ENCODE measurements at regions of chr12 and their contacts with region 1.

Region 1: DNA sequence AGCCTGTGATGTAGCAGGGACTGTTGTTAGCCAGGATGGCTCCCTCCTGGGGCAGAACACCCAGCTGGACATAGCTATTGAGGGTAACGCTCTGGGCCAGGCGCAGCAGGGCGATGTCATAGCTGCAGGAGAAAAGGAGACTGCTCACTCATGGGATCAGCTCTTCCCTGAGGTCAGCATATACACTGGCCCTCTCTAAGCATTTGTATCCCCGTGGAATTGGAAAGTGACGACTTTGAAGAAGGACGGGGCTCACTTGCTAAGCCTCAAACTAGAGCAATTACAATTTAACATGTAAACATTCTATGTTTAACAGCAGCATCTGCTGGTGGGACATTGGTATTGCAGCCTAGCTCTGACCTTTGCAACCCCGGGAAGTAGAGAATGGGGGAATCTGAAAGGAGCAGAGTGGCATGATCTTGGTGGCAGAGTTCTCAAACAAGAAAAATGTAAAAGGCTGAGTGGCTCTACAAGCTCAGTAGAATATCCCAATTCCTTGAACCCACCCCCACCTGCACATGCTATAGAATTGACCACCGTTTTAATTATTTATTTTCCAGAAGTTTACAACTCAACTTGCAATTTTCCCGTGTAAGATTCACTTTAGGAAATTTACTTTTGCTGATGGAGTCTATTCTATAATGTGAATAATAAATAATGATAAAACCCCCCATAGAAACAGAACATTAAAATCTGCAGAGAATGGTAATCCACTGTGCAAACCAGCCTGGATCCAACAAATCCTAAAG is 5.0 kb downstream of the CELA1 start:
- DNase-seq: peak in 1 of 2 experiments; percentile 79
- H3K4me3 ChIP-seq: peak overlapping the region in 1 of 4 experiments; percentile 37; a peak in 2 of 8 replicates
- H3K27ac ChIP-seq: no peak overlapping the region
- H3K4me1 ChIP-seq: peaks cover 0 to 3% (median 2%) of the 10 kb centered on the region in 4 experiments; a peak in 3 of 7 replicates
- H3K27me3 ChIP-seq: no peaks in the 10 kb centered on the region
- CTCF ChIP-seq: peak; percentile 58 to 99 (median 88)
- EP300 ChIP-seq: no peak
- POLR2A ChIP-seq: no peak
- RAD21 ChIP-seq: peak; percentile 98

Region 2: GRCh38 chr12:51246254-51246853 is 95.1 kb before region 1 on chr12:
- CTCF ChIA-PET with region 1: interaction called, 28 read pairs
- POLR2A ChIA-PET with region 1: no interaction called
- DNase-seq: no peak
- H3K4me3 ChIP-seq: no peak overlapping the region
- H3K27ac ChIP-seq: no peak overlapping the region
- H3K4me1 ChIP-seq: peaks cover 0 to 19% (median 7%) of the 10 kb centered on the region in 4 experiments; a peak in 6 of 7 replicates
- H3K27me3 ChIP-seq: no peaks in the 10 kb centered on the region
- CTCF ChIP-seq: peak in 2 of 3 experiments; percentile 39 to 40; a peak in 3 of 4 replicates
- EP300 ChIP-seq: no peak
- POLR2A ChIP-seq: no peak
- RAD21 ChIP-seq: peak; percentile 56 to 64

Region 3: DNA sequence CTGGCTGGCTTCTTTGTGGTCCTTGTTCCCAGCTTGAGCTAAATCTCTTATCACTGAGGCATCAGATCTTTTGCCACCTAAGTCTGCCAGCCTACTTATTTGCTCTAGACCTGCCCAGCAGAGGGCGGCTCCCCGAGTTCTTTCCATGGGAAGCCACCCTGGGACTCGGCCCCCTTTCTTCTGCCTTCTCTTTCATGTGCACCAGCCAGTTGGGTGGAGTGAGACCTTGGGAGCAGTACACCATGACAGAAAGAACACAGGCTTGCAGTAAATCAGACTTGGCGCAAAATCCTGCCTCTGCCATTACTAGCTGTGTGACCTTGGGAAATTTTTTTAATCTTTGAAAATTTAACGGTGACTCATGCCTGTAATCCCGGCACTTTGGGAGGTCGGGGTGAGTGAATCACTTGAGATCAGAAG is 78.7 kb before region 1 on chr12:
- CTCF ChIA-PET with region 1: interaction called, 111 read pairs
- POLR2A ChIA-PET with region 1: no interaction called
- DNase-seq: peak in 1 of 2 experiments; percentile 77
- H3K4me3 ChIP-seq: no peak overlapping the region
- H3K27ac ChIP-seq: no peak overlapping the region
- H3K4me1 ChIP-seq: 0 out of 7 replicates have a peak, but pooled peaks cover 0 to 2% (median 0%) of the 10 kb centered on the region in 4 experiments
- H3K27me3 ChIP-seq: no peaks in the 10 kb centered on the region
- CTCF ChIP-seq: peak; percentile 57 to 69 (median 65)
- EP300 ChIP-seq: no peak
- POLR2A ChIP-seq: no peak
- RAD21 ChIP-seq: peak; percentile 48 to 62

Region 4: GRCh38 chr12:51285841-51286240 is 55.6 kb before region 1 on chr12:
- CTCF ChIA-PET with region 1: interaction called, 33 read pairs
- POLR2A ChIA-PET with region 1: no interaction called
- DNase-seq: no peak
- H3K4me3 ChIP-seq: no peak overlapping the region
- H3K27ac ChIP-seq: no peak overlapping the region
- H3K4me1 ChIP-seq: no peaks in the 10 kb centered on the region
- H3K27me3 ChIP-seq: no peaks in the 10 kb centered on the region
- CTCF ChIP-seq: no peak
- EP300 ChIP-seq: no peak
- POLR2A ChIP-seq: no peak
- RAD21 ChIP-seq: no peak

Region 5: GRCh38 chr12:51307655-51308593 is 33.5 kb before region 1 on chr12:
- CTCF ChIA-PET with region 1: interaction called, 24 read pairs
- POLR2A ChIA-PET with region 1: interaction called, 4 read pairs
- DNase-seq: no peak
- H3K4me3 ChIP-seq: no peak overlapping the region
- H3K27ac ChIP-seq: no peak overlapping the region
- H3K4me1 ChIP-seq: no peaks in the 10 kb centered on the region
- H3K27me3 ChIP-seq: no peaks in the 10 kb centered on the region
- CTCF ChIP-seq: no peak
- EP300 ChIP-seq: no peak
- POLR2A ChIP-seq: no peak
- RAD21 ChIP-seq: no peak

Region 6: DNA sequence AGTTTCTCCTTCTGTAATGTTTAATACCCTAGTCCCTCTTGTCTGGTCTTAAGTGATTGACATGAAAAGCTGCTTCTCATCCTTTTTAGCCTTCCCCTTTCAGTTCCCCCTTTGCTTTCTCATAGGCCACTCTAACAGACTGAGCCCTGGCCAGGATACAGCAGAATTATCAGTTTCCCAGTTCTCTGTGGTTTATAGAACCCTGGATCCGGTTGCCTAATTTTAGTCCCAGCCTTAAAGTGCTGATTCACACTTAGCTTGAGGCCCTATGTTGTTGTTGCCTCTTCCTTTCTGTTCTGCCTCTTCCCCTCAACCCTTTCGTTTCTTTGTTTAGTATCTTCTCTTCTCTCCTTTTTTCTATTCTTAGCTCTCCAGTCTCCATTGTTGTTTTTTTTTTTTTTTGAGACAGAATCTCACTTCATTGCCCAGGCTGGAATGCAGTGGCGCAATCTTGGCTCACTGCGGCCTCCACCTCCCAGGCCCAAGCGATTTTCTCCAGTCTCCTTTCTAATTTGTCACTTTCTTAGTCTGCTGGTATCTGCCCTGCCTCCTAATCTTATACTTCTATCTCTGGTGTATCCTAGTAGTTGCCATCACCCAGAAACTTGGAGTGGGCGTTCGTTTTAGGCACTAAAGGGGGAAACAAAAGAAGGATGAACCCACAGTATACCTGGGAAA is 14.5 kb before region 1 on chr12:
- CTCF ChIA-PET with region 1: interaction called, 45 read pairs
- POLR2A ChIA-PET with region 1: interaction called, 8 read pairs
- DNase-seq: no peak
- H3K4me3 ChIP-seq: no peak overlapping the region
- H3K27ac ChIP-seq: no peak overlapping the region
- H3K4me1 ChIP-seq: peaks cover 0 to 3% (median 0%) of the 10 kb centered on the region in 4 experiments; a peak in 2 of 7 replicates
- H3K27me3 ChIP-seq: no peaks in the 10 kb centered on the region; a peak in 1 of 7 replicates
- CTCF ChIP-seq: no peak
- EP300 ChIP-seq: no peak
- POLR2A ChIP-seq: no peak
- RAD21 ChIP-seq: no peak

Region 7: DNA sequence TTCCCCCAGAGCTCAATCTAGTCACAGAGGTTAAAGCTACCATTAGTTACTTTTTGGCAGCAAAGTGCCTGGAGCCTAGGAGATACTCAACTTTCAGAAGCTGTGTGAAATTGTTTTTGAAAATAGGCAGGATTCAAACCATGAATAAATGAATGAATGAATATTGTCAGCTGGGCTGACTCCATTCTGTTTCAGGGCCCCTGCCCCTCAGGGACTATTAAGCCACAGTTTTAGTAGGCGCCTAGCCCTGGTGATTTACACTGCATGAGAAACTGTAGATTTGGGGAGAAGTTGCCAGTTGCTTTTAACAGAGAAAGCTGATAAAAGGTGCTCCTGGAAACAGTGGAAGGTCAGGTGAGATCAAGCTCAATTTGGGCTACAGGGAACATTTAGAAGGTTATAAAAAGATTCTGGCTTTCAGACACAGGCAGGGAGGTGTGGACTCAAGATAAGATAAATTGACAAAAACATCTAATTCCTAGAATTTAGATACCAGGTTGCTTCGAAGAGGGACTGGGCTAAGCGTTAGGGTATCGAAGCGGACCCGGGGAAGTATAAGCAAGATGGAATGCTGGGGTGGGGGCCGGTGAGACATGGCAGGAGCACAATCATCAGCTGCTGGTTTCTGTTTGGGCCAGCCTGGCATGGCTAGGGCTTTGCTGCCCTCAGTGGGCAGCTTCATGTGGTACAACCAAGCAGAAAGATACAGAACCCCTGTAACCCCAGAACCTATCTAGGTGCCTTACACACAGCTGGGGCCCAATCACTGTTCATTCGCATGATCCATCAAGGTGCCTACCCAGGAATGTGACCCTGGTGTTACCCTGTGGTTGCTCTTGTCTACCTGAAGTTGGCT is 20.0 kb after region 1 on chr12:
- CTCF ChIA-PET with region 1: interaction called, 119 read pairs
- POLR2A ChIA-PET with region 1: no interaction called
- DNase-seq: no peak
- H3K4me3 ChIP-seq: no peak overlapping the region
- H3K27ac ChIP-seq: no peak overlapping the region
- H3K4me1 ChIP-seq: no peaks in the 10 kb centered on the region; a peak in 1 of 7 replicates
- H3K27me3 ChIP-seq: no peaks in the 10 kb centered on the region
- CTCF ChIP-seq: 0 out of 4 replicates have a peak, but pooled peaks of 1 of the 3 experiments have one; percentile 11
- EP300 ChIP-seq: no peak
- POLR2A ChIP-seq: no peak
- RAD21 ChIP-seq: peak in 1 of 2 experiments; percentile 4; a peak in 1 of 4 replicates

Region 8: DNA sequence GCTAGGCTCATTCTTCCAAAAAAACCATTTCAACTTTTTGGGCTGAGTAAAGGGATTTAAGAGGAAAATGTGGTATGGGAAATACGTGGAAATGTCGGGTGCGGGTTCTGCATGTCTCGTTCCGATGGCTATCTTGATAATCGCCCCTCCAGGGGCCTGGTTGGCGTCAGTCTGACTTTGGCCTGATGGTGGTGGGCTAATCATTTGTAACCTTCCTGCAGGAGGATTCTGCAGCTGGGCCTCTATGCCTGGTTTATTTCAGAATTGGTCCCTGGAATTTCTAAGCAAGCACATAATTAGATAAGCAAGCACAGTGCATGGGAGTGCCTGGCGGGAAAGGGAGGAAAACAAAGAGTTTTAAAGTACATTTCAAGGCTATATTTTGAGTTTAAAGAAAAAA is 68.4 kb after region 1 on chr12:
- CTCF ChIA-PET with region 1: no interaction called
- POLR2A ChIA-PET with region 1: no interaction called
- DNase-seq: no peak
- H3K4me3 ChIP-seq: no peak overlapping the region
- H3K27ac ChIP-seq: no peak overlapping the region
- H3K4me1 ChIP-seq: no peaks in the 10 kb centered on the region; a peak in 1 of 7 replicates
- H3K27me3 ChIP-seq: no peaks in the 10 kb centered on the region
- CTCF ChIP-seq: peak in 1 of 3 experiments; percentile 8; a peak in 1 of 4 replicates
- EP300 ChIP-seq: no peak
- POLR2A ChIP-seq: no peak
- RAD21 ChIP-seq: peak; percentile 3 to 20; a peak in 2 of 4 replicates